ENCODE measurements at regions of chr17 and their contacts with region 1.

Region 1: DNA sequence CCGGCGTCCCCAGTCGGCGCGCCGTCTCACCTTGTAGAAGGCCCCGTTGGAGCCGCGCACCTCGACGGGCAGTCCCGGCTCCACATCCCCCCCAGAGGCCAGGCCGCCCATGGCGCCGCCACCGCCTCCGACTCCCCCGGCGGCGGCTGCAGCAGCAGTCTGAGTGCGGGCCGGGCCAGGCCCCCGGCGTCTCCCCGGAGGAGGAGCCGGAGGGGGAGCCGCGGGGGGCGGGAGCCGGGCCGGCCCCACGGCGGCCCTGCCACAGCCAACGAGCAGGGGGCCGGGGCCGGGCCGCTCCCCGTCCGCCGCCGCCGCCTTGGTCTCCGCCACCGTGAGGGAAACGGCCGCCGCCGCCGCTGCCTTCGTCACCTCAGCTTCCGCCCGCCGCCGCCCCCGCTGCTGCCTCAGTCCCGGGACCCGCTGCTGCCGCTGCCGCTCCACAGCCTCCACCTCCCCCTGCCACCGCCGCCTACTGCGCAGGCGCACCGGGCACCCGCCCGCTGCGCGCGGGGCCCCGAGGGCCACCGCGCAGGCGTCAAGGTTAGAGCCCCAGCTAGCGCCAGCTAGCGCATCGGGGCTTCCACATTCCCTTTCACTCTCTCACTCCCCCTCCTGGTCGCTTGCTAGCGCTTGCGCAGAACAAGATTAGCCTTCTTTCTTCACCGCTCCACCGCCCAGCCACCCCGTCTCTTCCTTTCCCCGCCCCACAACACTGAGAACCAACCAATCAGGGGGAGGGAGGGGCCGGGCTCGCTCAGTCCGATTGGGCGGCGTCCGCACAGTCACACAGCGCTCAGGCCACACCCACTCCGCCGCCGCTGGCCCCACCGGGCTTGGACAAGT is at the start of gene FXR2:
- DNase-seq: peak; percentile 97
- ATAC-seq: peak; percentile 93
- H3K4me3 ChIP-seq: peak within 1 kb of the TSS; percentile 95
- H3K27ac ChIP-seq: peak within 1 kb of the TSS; percentile 36
- H3K4me1 ChIP-seq: peaks cover 19% of the 10 kb centered on the region
- H3K27me3 ChIP-seq: no peaks in the 10 kb centered on the region
- CTCF ChIP-seq: peak; percentile 52
- total RNA-seq, gene FXR2: 51.4 and 67.2 TPM in 2 replicates

Region 2: GRCh38 chr17:7511108-7511507 is 103.5 kb before region 1 on chr17:
- CTCF ChIA-PET with region 1: no interaction called
- POLR2A ChIA-PET with region 1: no interaction called
- intact Hi-C with region 1: no loop called
- DNase-seq: no peak
- ATAC-seq: no peak
- H3K4me3 ChIP-seq: no peak overlapping the region
- H3K27ac ChIP-seq: no peak overlapping the region
- H3K4me1 ChIP-seq: no peaks in the 10 kb centered on the region
- H3K27me3 ChIP-seq: no peaks in the 10 kb centered on the region
- CTCF ChIP-seq: no peak

Region 3: DNA sequence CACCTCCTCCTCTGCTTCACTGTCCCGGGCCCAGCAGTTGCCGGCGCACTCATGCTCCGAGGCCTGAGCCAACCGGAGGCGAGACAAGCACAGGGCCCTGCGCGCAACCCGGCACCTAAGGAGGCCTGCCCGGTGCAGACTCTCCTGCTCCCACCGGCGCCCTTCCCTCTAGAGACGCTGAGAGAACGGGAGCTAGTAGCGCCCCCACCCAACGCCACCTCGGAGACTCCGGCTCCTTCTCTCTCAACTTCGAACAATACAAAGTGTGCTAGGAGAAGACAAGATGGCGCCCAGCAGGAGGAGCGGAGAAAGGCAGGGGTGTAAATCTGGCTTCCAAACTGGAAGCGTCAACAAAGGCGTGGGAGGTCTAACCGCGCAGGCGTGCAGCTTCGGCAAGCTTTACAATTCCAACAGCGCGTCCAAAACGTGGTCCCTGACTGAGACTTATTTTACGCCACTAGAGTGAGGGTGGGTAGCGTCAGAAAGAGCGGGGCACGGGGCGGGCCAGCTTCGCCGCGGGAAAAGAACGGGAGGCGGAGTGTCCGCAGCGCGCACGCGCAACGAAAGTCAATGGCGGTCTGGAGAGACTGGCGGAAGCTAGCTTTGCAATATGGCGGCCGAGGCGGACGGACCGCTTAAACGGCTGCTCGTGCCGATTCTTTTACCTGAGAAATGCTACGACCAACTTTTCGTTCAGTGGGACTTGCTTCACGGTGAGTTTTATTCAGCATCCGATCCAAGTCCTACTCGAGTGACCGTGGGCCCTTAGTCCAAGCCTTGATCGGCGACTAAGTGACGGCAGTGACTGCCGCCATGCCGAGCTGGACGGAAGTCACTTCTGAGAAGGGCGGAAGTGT is 31.2 kb before region 1 on chr17 and contains the start of gene MPDU1:
- CTCF ChIA-PET with region 1: no interaction called
- POLR2A ChIA-PET with region 1: interaction called, 11 read pairs
- intact Hi-C with region 1: no loop called
- DNase-seq: peak; percentile 91
- ATAC-seq: peak; percentile 46
- H3K4me3 ChIP-seq: peak within 1 kb of the TSS; percentile 81
- H3K27ac ChIP-seq: peak within 1 kb of the TSS; percentile 90
- H3K4me1 ChIP-seq: peaks cover 46% of the 10 kb centered on the region
- H3K27me3 ChIP-seq: no peaks in the 10 kb centered on the region
- CTCF ChIP-seq: no peak
- total RNA-seq, gene MPDU1: 71.0 and 94.1 TPM in 2 replicates